Activated CD4-positive, alpha-beta T cell treated with anti-CD3 and anti-CD28 coated beads, Interleukin-2, amount 10 ng/mL, durations not matched to agents 7 days and 5 days (primary cell): ENCODE measurements at regions of chr11 and their contacts with region 1.

Region 1: DNA sequence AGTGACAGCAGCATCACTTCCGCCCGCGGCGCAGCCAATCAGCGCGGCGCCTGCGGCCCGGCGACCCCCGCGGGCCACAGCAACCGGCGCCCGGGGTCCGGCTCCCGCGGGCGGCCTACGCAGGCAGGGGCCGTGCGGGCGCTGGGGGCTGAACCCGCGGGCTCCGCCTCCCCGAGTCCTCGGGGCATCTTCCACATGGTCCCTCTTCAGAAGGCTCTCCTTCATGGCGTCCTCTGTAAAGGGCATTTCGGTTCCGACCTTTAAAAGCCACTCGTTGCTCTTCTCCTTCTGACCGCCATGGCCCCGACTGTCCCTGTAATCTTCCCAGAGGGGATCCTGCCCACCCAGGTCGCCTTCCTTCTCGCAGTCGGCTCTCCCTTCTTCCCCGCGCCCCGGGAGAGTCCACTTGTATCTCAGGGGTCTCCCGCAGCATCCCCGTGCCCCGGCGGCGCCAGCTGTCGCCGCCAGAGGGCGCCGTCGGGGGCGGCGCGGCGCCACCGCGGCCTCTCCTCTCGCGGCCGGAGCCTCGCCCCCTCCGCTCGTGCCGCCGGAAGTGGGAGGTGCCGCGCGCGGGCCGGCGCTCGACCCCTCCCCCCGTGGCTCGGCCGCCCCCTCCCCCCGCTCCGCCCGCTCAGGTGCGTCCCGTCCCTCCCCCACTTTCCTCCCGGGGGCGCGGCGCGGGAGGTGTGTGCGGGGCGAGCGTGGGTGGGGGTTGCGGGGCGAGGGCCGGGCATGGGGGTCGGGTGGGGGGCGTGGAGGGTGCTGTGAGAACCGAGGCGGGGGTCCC is at the start of gene RNF214:
- DNase-seq: peak; percentile 71
- H3K4me3 Mint-ChIP-seq: peak within 1 kb of the TSS; percentile 98
- H3K27ac Mint-ChIP-seq: peak within 1 kb of the TSS; percentile 100
- H3K4me1 Mint-ChIP-seq: peaks cover 45% of the 10 kb centered on the region
- H3K27me3 Mint-ChIP-seq: no peaks in the 10 kb centered on the region
- total RNA-seq, gene RNF214: 22.2 to 23.8 TPM

Region 2: GRCh38 chr11:117249571-117249970 is 17.3 kb after region 1 on chr11:
- CTCF ChIA-PET with region 1: interaction called, 11 read pairs
- POLR2A ChIA-PET with region 1: no interaction called
- DNase-seq: no peak
- H3K4me3 Mint-ChIP-seq: no peak overlapping the region
- H3K27ac Mint-ChIP-seq: no peak overlapping the region
- H3K4me1 Mint-ChIP-seq: peaks cover 3% of the 10 kb centered on the region
- H3K27me3 Mint-ChIP-seq: no peaks in the 10 kb centered on the region